PC-3 (cell line): ENCODE measurements at regions of chr4 and their contacts with region 1.

Region 1: DNA sequence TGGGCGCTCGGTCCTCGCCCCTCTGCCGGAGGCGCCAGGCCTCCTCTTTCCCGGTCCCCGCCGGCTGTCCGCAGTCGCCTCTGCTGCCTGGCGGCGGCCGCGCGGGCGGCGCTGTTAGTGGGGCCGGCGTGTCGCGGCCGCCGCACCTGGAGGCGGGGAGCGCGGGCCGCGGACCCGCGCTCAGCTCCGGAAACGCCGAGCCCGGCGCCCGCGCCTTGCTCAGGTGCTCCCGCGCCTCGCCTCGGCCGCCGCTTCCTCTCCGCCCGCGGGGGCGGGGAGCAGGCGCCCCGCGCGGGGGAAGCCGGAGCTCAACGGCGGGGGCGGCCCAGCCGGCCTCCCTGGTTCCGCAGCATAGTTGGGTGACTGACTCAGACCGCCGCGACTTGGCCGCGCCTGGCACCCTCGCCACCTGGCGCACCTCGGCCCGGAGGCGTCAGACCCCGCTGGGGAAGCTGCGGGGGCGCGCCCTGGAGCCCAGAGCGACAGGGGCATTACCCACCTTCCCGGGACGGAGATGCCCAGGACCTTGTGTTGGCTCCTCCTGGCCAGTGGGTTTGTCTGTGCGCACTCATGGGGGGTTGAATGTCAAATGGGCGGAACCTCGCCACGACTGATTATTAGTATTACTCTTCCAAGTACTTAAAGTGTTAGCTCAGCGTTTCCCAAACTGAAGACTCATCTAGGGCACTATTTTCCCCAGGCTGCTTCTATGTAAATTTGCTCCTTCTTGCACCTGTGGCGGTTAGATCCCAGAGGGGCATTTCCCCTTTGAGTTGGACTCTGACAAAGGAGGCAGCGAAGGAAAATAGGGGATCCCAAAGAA is at the start of gene ARAP2:
- DNase-seq: peak; percentile 87
- ATAC-seq: peak; percentile 77
- H3K4me3 ChIP-seq: peak within 1 kb of the TSS; percentile 80
- H3K27ac ChIP-seq: peak within 1 kb of the TSS; percentile 67
- H3K4me1 ChIP-seq: peaks cover 22% of the 10 kb centered on the region
- H3K27me3 ChIP-seq: no peaks in the 10 kb centered on the region
- CTCF ChIP-seq: no peak
- total RNA-seq, gene ARAP2: 12.5 and 13.2 TPM in 2 replicates

Region 2: GRCh38 chr4:36000946-36001557 is 243.4 kb before region 1 on chr4:
- CTCF ChIA-PET with region 1: no interaction called
- POLR2A ChIA-PET with region 1: interaction called, 13 read pairs
- intact Hi-C with region 1: no loop called
- DNase-seq: no peak
- ATAC-seq: no peak
- H3K4me3 ChIP-seq: no peak overlapping the region
- H3K27ac ChIP-seq: no peak overlapping the region
- H3K4me1 ChIP-seq: peaks cover 16% of the 10 kb centered on the region
- H3K27me3 ChIP-seq: no peaks in the 10 kb centered on the region
- CTCF ChIP-seq: no peak

Region 3: DNA sequence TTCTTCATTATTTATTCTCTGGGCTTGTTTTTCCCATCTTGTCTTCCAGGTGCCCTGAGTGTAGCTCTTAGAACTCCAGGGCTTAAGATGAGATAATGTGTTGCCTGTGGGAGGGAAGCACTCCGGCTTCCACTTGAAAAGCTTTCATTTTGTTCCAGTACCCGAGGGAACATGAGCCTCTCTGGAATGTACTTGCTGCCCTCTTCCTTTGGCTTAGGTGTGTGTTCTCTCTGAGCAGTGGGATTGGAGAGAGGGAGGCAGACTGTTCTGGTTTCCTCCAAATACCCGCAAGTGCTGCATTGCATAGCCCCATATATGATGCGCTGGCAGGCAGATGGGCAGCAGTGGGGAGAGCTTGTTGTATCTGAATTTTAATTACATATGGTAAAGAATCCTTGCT is 36.1 kb after region 1 on chr4:
- CTCF ChIA-PET with region 1: no interaction called
- POLR2A ChIA-PET with region 1: interaction called, 4 read pairs
- intact Hi-C with region 1: loop called (anchors 2 kb)
- DNase-seq: no peak
- ATAC-seq: no peak
- H3K4me3 ChIP-seq: no peak overlapping the region
- H3K27ac ChIP-seq: no peak overlapping the region
- H3K4me1 ChIP-seq: peaks cover 12% of the 10 kb centered on the region
- H3K27me3 ChIP-seq: no peaks in the 10 kb centered on the region
- CTCF ChIP-seq: no peak

Region 4: DNA sequence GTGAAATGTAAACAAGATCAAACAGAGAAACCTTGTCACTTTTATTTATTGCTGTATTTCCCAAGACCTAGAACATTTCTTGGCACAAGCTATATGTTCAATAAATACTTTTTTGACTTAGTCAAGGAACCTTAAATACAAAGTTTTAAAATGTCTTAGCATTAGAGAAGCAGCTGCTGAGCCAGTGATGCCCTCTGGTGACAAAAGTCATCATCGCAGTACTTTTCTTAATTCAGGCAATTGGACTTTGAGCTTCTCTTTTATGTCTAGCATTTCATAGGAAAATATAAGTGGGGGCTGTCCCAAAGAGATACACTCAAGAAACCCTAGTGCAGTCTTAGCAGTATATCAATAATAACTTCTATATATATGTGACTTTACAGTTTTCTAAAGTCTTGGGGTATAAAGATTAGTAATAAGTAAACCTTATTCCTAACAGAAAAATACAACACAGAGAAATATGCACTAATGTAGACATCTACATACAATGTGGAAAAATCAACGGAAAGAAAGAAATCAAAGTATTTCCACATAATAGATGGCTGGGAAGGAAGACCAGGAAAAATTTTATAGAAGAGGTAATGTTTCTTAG is 155.4 kb after region 1 on chr4:
- CTCF ChIA-PET with region 1: no interaction called
- POLR2A ChIA-PET with region 1: no interaction called
- intact Hi-C with region 1: loop called (anchors 5 kb)
- DNase-seq: peak; percentile 53
- ATAC-seq: no peak
- H3K4me3 ChIP-seq: no peak overlapping the region
- H3K27ac ChIP-seq: no peak overlapping the region
- H3K4me1 ChIP-seq: no peaks in the 10 kb centered on the region
- H3K27me3 ChIP-seq: peaks cover 15% of the 10 kb centered on the region
- CTCF ChIP-seq: peak; percentile 77